ENCODE measurements at regions of chr12 and their contacts with region 1.

Region 1: DNA sequence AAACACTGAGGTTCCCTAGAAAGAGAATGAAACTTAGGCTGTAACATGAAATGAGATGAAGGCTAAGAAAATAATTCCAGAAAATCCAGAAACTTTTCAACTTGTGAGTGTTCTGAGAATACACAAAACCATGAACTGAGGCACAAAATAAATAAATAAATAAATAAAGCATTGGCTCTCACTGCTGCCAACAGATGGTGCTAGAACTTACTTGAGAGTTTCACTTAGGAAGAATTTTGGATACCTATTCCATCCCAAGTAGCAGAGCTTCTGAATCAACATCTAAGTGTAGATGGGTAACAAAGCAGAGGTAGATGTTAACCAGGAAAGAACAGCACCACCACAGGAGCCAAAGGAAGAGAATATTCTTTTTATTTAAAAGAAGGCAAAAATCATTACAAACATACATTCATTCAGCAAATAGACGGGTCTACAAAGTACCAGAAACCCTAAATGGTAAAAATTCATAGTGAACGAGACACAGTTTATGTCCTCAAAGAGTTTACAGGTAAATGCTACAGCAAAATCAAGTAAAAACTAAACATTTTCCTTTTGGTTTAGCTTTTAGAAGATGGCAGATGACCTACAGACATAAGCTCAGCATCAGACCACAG is 16.7 kb downstream of the EPS8 start:
- DNase-seq: no peak
- ATAC-seq: peak; percentile 55; the same call in 1 of the 2 replicates
- H3K4me3 ChIP-seq: no peak overlapping the region
- H3K27ac ChIP-seq: no peak overlapping the region
- H3K4me1 ChIP-seq: peaks cover 0 to 19% of the 10 kb centered on the region in 2 experiments; a peak in 2 of 4 replicates
- H3K27me3 ChIP-seq: no peaks in the 10 kb centered on the region
- CTCF ChIP-seq: peak; percentile 29 to 69 (median 45); a peak in 5 of 6 replicates
- POLR2A ChIP-seq: no peak
- RAD21 ChIP-seq: peak; percentile 46; the same call in 1 of the 2 replicates

Region 2: GRCh38 chr12:15532364-15532977 is 240.0 kb before region 1 on chr12:
- CTCF ChIA-PET with region 1: no interaction called
- POLR2A ChIA-PET with region 1: no interaction called
- RAD21 ChIA-PET with region 1: no interaction called
- intact Hi-C with region 1: loop called (anchors 10 kb)
- DNase-seq: peak; percentile 72
- ATAC-seq: peak; percentile 96
- H3K4me3 ChIP-seq: no peak overlapping the region
- H3K27ac ChIP-seq: no peak overlapping the region
- H3K4me1 ChIP-seq: peaks cover 0 to 4% of the 10 kb centered on the region in 2 experiments; a peak in 1 of 4 replicates
- H3K27me3 ChIP-seq: no peaks in the 10 kb centered on the region
- CTCF ChIP-seq: peak; percentile 62 to 68 (median 65); a peak in 5 of 6 replicates
- POLR2A ChIP-seq: no peak
- RAD21 ChIP-seq: peak; percentile 83

Region 3: DNA sequence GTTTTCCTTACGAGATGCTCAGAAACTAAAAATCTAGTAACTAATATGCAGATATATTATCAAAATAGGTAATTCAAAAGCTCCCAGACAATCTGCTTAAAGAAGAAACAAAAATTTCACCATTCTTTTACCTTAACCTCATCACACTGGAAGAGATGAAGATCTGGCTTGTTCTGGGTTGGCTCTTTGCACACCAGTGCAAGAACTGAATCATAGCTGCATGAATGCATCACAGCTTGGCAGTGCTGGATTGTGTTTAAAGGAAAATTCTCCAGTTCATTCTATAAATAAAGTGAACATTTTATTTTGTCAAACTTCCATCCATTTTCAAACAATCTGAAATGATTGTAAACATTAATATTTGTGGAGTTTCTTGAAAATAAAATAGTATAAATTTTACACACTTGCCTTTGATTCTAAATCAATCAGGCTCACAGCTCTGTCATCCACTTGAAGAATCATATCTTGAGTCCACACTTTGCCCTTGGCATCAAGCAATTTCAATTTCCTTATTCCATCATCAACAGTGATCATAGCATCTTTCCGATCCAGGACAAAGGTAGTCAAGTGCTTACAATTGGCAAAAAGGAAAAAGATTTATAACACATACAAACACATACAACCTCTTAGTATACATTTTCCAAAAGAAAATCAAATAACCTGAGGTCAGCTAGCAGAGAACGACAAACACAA is 103.1 kb before region 1 on chr12:
- CTCF ChIA-PET with region 1: no interaction called
- POLR2A ChIA-PET with region 1: no interaction called
- RAD21 ChIA-PET with region 1: no interaction called
- intact Hi-C with region 1: no loop called
- DNase-seq: no peak
- ATAC-seq: no peak
- H3K4me3 ChIP-seq: no peak overlapping the region
- H3K27ac ChIP-seq: no peak overlapping the region
- H3K4me1 ChIP-seq: peaks cover 0 to 6% of the 10 kb centered on the region in 2 experiments; a peak in 2 of 4 replicates
- H3K27me3 ChIP-seq: no peaks in the 10 kb centered on the region
- CTCF ChIP-seq: no peak
- POLR2A ChIP-seq: no peak
- RAD21 ChIP-seq: no peak

Region 4: DNA sequence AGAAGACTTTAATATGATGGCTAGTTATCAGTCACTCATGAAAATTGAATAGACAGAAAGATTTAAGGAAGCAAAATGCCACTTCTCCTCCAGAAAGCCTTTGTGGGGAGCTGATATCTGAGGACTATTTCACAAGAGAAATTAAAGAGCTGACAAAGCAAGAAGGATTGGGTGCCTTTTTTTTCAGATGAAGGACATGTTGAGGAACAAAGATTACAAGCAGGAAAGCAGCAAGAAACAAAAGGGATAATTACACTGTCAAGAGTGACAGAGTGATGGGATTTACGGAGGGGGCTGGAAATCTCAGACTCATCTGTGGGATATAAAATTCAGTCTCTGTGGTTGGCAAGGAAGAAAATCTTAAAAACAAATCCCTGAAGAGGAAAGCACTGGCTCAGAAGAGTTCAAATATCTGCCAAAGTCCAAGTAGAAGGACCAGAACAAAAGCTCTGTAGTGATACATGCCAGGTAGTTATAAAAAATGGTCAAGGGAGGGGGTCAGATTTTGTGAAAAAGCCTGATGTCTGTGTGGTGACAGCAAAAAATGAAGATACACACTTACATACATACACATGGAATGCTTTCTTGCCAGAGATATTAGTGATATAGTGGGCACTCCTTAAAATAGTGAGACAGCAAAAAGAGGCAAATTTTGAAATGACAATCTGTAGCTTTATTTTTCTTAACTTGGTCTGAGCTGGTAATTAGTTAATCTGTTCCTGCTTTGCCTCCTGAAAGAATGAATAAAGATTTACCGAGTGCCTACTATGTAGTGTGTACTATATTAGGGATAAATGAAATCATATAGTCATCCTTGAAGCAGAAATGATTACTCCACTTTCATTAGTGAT is 46.3 kb before region 1 on chr12:
- CTCF ChIA-PET with region 1: no interaction called
- POLR2A ChIA-PET with region 1: no interaction called
- RAD21 ChIA-PET with region 1: no interaction called
- intact Hi-C with region 1: no loop called
- DNase-seq: no peak
- ATAC-seq: no peak
- H3K4me3 ChIP-seq: no peak overlapping the region
- H3K27ac ChIP-seq: no peak overlapping the region
- H3K4me1 ChIP-seq: peaks cover 22 to 54% of the 10 kb centered on the region in 2 experiments
- H3K27me3 ChIP-seq: no peaks in the 10 kb centered on the region
- CTCF ChIP-seq: no peak
- POLR2A ChIP-seq: no peak
- RAD21 ChIP-seq: no peak

Measured in HCT116 (cell line).